Posterior cingulate gyrus (tissue), 11 donors: ENCODE measurements at regions of chr6 and their contacts with region 1.

Region 1: DNA sequence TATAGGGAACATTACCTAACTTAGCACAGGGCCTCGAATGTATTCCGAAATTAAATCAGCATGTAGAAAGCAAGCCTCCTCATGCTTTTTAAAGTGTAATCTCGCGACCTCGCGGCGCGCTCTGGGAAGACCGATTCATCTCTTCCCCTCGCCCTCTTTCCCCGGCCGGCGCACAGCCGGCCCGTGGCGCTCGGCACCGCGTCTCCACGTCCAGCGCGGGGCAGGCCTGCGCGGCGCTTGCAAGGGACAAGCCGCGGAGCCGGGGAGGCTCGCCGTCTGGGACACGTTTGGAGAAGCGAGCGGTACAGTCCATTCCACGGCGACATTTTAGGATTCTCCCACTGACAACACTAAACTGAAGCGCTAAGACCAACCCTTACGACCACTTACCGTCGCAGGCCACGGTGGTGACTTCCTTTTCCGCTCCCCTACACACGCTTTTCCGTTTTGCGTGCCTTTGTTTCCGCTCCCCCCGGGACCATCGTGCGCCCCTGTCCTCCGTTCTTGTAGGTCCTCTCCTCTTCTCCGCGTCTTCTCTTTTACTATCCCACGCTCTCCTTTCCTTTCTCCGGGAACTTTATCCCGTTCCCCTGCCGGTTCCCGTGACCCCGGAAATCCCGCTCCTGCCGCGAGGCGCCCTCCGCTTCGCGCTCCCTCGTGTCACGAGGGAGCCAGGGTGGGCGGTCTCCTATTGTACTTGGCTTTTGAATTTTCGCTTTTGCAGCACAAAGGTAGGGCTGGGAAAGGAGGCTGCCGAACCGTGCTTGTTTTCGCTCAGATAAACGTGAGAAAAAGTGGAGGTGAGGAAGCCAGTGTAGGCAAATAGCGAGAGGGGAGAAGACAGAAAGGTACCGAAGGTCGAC is at the start of gene ECHDC1:
- DNase-seq: peak; percentile 44 to 93 (median 62)

Region 2: DNA sequence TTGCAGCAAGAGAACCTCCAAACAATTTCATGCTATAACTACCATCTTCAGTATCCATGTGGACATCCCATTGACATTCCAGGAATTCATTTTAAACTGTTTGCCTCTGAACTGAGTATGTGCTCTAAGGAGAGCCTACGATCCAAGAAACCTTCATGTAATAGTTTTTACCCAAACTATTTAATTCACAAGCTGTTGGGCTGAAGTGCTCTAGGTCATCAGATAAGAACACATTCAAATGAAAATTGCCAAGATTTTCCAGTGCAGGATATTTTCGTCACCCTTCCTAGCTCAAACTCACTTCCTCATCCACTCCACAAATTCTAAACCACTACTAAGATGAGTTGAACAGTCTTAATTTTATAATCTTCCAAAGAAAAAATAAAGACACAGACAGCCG is 211.9 kb before region 1 on chr6:
- intact Hi-C with region 1: no loop called
- DNase-seq: no peak

Region 3: GRCh38 chr6:127420556-127420955 is 77.4 kb after region 1 on chr6:
- intact Hi-C with region 1: loop called (anchors 5 kb)
- DNase-seq: peak in 5 of 10 donors; percentile 13 to 79 (median 28)